PC-9 (cell line): ENCODE measurements at regions of chr6 and their contacts with region 1.

Region 1: DNA sequence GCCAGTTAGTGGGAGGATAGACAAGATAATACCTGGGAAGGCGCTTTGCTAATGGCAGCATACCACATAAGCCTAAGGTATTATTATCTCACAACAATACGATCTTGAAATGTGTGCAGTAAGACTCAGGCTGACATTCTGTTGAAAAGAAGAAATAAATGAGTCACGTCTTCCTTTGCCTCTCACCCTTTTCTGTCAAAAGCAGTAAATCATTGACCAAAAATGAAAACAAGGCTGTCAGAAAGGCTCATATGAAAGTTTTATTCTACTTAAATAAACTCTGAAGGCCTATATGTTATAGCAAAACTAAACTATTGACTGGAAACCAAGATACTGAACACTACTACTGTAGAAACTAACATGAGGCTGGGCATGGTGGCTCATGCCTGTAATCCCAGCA is 43.1 kb upstream of the IL20RA start:
- DNase-seq: no peak
- H3K4me3 ChIP-seq: no peak overlapping the region
- H3K27ac ChIP-seq: no peak overlapping the region
- H3K4me1 ChIP-seq: no peaks in the 10 kb centered on the region
- H3K27me3 ChIP-seq: no peaks in the 10 kb centered on the region
- CTCF ChIP-seq: no peak

Region 2: DNA sequence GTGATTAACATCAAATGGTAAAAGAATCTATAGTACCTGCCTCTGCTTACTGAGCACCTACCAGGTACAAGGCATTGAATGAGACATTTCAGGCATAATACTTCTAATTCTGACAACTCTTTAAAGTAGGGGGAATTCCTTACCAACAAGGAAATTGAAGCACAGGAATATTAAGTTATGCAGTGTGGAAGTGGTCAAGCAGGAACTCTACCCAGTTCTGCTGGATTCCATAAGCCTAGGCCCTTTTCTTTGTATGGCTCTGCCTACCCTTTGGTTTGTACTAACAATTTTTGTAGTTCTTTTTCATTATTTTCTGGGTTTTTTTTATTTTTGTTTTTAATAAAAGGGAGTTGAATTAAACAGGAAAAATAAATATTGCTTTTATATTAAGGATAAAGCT is 410.1 kb before region 1 on chr6:
- CTCF ChIA-PET with region 1: no interaction called
- POLR2A ChIA-PET with region 1: interaction called, 20 read pairs
- intact Hi-C with region 1: no loop called
- DNase-seq: peak; percentile 54 to 96
- H3K4me3 ChIP-seq: peak overlapping the region; percentile 37; the same call in 1 of the 2 replicates
- H3K27ac ChIP-seq: peak overlapping the region; percentile 65
- H3K4me1 ChIP-seq: peaks cover 54% of the 10 kb centered on the region
- H3K27me3 ChIP-seq: no peaks in the 10 kb centered on the region
- CTCF ChIP-seq: no peak

Region 3: DNA sequence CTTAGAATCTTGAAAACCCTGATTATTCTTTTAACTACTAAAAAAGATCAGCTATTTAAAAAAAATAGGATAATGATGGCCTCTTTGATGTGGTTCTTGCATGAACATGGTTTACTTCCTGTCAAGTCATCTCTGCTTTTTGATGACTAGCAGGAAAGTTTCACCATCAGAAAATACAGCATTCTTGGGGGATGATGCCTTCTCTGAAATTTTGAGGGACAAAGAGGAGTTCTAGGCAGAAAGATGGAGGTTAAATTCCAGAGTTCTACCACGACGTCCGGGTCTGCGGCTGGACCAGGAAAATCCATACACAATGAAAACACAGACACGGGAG is 275.9 kb after region 1 on chr6:
- CTCF ChIA-PET with region 1: no interaction called
- POLR2A ChIA-PET with region 1: no interaction called
- intact Hi-C with region 1: no loop called
- DNase-seq: peak in 1 of 2 experiments; percentile 34
- H3K4me3 ChIP-seq: no peak overlapping the region
- H3K27ac ChIP-seq: no peak overlapping the region
- H3K4me1 ChIP-seq: no peaks in the 10 kb centered on the region
- H3K27me3 ChIP-seq: no peaks in the 10 kb centered on the region
- CTCF ChIP-seq: no peak